BJ (cell line): ENCODE measurements at regions of chr3 and their contacts with region 1.

Region 1: DNA sequence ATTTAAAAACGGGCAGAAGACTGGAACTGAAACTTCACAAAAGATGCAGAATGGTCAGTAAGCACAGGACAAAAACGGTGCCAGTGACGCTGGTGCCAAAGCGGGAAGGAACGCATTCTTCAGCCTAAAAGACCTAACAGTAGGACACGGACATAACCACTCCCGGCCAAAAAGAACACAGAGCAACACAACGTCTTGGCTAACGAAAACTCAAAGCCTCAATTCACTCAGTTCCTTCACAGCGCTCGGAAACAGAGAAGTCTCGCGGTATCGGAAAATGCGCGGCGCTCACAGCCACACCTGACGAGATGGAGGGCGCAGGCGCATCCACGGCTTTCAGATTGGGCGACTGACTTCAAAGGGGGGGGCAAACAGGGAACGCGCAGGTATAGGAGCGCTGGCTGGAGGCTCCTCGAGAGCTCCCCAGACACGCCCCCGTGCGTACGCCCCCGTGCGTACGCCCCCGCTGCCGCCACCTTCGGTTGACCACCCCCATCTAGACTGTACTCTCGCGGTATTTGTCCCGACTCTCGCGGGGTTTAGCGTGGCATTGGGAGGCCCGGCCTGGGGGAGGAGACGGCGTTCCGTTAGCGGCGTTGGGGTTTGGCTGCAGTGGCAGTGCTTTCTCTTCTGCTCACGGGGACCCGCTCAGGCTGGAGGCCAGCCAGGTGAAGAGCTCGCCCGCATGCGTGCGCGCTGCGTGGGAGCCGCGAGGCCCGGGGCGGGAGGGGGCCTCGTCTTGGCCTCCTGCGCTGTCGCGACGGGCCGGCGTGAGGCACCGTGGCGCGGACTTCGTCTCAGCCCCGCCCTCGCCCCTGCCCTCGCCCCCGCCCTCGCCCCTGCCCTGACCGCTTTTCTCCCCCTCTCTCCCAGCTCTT is at the start of gene NKTR:
- DNase-seq: peak; percentile 91
- H3K4me3 ChIP-seq: peak within 1 kb of the TSS; percentile 93
- H3K27me3 ChIP-seq: no peaks in the 10 kb centered on the region
- CTCF ChIP-seq: 0 out of 2 replicates have a peak, but pooled peaks have one; percentile 5
- polyA plus RNA-seq, gene NKTR: 19.0 and 37.6 TPM in 2 replicates

Region 2: GRCh38 chr3:42613462-42613861 is 13.1 kb after region 1 on chr3:
- CTCF ChIA-PET with region 1: interaction called, 18 read pairs
- POLR2A ChIA-PET with region 1: interaction called, 4 read pairs
- DNase-seq: no peak
- H3K4me3 ChIP-seq: no peak overlapping the region
- H3K27me3 ChIP-seq: no peaks in the 10 kb centered on the region
- CTCF ChIP-seq: peak; percentile 40; the same call in 1 of the 2 replicates